GM12878 (cell line): ENCODE measurements at regions of chr1 and their contacts with region 1.

Region 1: GRCh38 chr1:189847613-189848012 is 630.1 kb downstream of the BRINP3 start:
- DNase-seq: no peak
- ATAC-seq: no peak
- H3K4me3 ChIP-seq: no peak overlapping the region
- H3K27ac ChIP-seq: no peak overlapping the region
- H3K4me1 ChIP-seq: no peaks in the 10 kb centered on the region
- H3K27me3 ChIP-seq: no peaks in the 10 kb centered on the region
- CTCF ChIP-seq: no peak
- EP300 ChIP-seq: no peak
- POLR2A ChIP-seq: no peak
- RAD21 ChIP-seq: no peak

Region 2: DNA sequence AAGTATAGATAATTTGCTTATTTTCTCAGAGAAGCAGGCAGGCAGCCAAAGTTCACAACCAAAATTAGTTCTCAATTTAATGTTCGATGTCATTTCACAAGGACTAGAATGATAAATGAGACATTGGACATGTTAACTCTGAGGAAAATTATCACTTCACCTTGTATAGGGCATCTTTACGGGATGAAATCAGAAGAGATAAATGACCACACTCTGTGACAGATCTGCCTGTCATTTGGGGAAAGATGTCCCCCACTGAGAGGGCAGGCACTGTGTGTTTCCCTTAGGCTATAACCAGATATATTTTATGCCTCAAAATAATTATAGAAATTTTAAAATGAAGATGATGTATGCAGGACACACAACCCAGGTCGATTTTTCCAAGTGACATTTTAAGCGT is 12.8 kb before region 1 on chr1:
- CTCF ChIA-PET with region 1: no interaction called
- POLR2A ChIA-PET with region 1: no interaction called
- RAD21 ChIA-PET with region 1: no interaction called
- SMC1A ChIA-PET with region 1: no interaction called
- in situ Hi-C with region 1: no loop called
- intact Hi-C with region 1: no loop called
- DNase-seq: no peak
- ATAC-seq: no peak
- H3K4me3 ChIP-seq: no peak overlapping the region
- H3K27ac ChIP-seq: no peak overlapping the region
- H3K4me1 ChIP-seq: no peaks in the 10 kb centered on the region
- H3K27me3 ChIP-seq: no peaks in the 10 kb centered on the region
- CTCF ChIP-seq: no peak
- EP300 ChIP-seq: no peak
- POLR2A ChIP-seq: no peak
- RAD21 ChIP-seq: no peak

Region 3: GRCh38 chr1:189899686-189900440 is 52.2 kb after region 1 on chr1:
- CTCF ChIA-PET with region 1: no interaction called
- POLR2A ChIA-PET with region 1: no interaction called
- RAD21 ChIA-PET with region 1: no interaction called
- SMC1A ChIA-PET with region 1: no interaction called
- in situ Hi-C with region 1: no loop called
- intact Hi-C with region 1: loop called (anchors 10 kb)
- DNase-seq: no peak
- ATAC-seq: no peak
- H3K4me3 ChIP-seq: no peak overlapping the region
- H3K27ac ChIP-seq: no peak overlapping the region
- H3K4me1 ChIP-seq: no peaks in the 10 kb centered on the region
- H3K27me3 ChIP-seq: no peaks in the 10 kb centered on the region
- CTCF ChIP-seq: no peak
- EP300 ChIP-seq: no peak
- POLR2A ChIP-seq: no peak
- RAD21 ChIP-seq: no peak